ENCODE measurements at regions of chr2 and their contacts with region 1.

Region 1: GRCh38 chr2:131673392-131674173 is 145.9 kb downstream of the CCDC74A start:
- DNase-seq: peak; percentile 62
- ATAC-seq: peak; percentile 78
- H3K4me3 Mint-ChIP-seq: peak overlapping the region; percentile 64
- H3K27ac Mint-ChIP-seq: no peak overlapping the region
- H3K4me1 Mint-ChIP-seq: peaks cover 19% of the 10 kb centered on the region
- H3K27me3 Mint-ChIP-seq: peaks cover 12% of the 10 kb centered on the region
- CTCF ChIP-seq: peak; percentile 68

Region 2: DNA sequence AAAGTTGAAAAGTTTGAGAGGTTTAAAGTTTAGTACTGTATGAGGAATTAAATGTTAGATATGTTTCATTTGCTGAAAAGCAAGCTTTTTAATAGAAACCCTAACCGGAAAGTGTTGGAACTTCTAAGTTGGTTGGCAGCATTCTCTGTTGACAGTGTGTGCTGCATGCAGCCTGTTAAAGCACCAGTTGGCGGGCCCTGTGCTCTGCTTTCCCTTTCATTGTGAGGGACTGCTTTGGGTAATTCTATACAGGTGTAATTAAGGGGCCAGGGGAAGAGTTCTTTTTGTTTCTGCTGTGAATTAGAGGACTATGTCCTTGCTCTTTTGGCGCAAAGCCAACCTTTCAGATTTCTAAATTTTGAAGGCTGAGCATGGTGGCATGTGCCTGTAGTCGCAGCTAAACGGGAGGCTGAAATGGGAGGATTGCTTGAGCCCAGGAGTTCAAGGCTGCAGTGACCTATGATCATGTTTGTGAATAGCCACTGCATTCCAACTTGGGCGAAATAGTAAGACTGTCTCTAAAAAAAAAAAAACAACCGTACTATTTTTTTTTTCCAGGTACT is 548.3 kb before region 1 on chr2:
- CTCF ChIA-PET with region 1: no interaction called
- POLR2A ChIA-PET with region 1: no interaction called
- intact Hi-C with region 1: no loop called
- DNase-seq: no peak
- ATAC-seq: no peak
- H3K4me3 Mint-ChIP-seq: no peak overlapping the region
- H3K27ac Mint-ChIP-seq: no peak overlapping the region
- H3K4me1 Mint-ChIP-seq: no peaks in the 10 kb centered on the region
- H3K27me3 Mint-ChIP-seq: no peaks in the 10 kb centered on the region
- CTCF ChIP-seq: no peak

Region 3: GRCh38 chr2:131154071-131154531 is 519.5 kb before region 1 on chr2:
- CTCF ChIA-PET with region 1: interaction called, 21 read pairs
- POLR2A ChIA-PET with region 1: no interaction called
- intact Hi-C with region 1: loop called (anchors 1 kb)
- DNase-seq: peak; percentile 49
- ATAC-seq: peak; percentile 91
- H3K4me3 Mint-ChIP-seq: no peak overlapping the region
- H3K27ac Mint-ChIP-seq: no peak overlapping the region
- H3K4me1 Mint-ChIP-seq: peaks cover 21% of the 10 kb centered on the region
- H3K27me3 Mint-ChIP-seq: no peaks in the 10 kb centered on the region
- CTCF ChIP-seq: no peak

Region 4: DNA sequence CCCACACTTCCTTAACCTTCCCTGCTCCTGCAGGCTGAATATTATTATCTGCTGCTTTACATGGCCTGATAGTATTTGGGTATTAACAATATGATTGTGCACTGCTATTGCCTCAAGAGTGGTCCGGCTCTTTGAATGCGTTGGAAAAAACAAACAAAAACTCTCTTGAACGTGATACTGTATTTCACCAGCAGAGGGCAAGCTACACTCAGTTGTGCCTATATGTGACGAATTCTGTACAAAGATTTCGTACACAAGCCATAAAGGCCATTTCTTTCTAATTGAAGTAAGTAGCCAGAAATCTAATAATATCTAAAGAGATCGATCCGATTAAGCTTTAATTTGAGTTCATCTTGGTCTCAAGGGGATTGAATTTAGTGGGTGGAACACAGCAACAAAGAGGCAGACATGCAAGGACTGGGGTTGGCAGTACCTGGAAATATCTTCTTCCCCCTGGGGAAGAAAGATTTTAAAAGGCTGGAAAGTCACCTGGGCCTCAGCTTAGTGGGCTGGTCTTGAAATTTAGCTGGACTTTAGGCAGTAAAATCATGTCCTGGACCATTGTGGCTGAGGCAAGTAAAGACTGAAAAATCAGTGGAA is 260.3 kb before region 1 on chr2:
- CTCF ChIA-PET with region 1: interaction called, 42 read pairs
- POLR2A ChIA-PET with region 1: no interaction called
- intact Hi-C with region 1: loop called (anchors 1 kb)
- DNase-seq: no peak
- ATAC-seq: peak; percentile 65
- H3K4me3 Mint-ChIP-seq: no peak overlapping the region
- H3K27ac Mint-ChIP-seq: no peak overlapping the region
- H3K4me1 Mint-ChIP-seq: no peaks in the 10 kb centered on the region
- H3K27me3 Mint-ChIP-seq: peaks cover 36% of the 10 kb centered on the region
- CTCF ChIP-seq: peak; percentile 57

Region 5: DNA sequence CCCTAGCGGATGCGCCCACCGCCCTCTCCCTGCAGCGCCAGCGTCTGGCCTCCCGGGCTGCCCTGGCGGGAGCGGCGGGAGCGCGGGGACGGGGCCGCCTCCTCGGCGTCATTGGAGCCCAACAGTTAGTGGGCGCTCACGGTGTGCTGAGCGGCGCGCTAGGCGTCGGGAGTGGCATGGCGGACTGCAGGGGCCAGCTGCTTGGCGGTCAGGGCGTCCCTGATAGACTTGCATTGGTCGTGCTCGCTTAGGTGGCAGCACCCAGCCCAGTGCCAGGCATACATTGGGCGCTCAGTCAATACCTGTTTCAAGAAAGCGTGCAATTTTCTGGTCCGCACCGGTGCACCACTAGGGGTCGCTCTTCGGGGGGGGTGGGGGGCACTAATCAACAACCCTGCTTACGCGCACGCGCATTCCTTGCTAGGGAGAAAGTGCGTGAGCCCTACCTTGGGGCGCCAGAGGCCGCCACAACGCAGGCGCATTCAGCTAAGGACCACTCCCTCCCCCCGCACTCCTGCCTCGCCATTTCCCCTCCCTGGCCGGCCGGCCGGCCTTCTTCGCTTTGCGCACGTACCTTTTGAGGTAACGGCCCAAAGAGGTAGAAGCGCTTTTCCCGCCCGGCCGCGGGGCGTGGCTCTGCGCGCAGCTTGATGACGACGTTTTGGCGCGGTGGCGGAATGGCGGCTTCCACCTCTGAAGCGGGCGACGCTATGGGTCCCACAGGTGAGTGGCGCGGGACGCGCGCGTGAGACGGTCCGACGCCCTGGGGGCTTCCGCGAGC is 181.0 kb before region 1 on chr2:
- CTCF ChIA-PET with region 1: interaction called, 12 read pairs
- POLR2A ChIA-PET with region 1: no interaction called
- intact Hi-C with region 1: loop called (anchors 1 kb)
- DNase-seq: peak; percentile 97
- ATAC-seq: peak; percentile 86
- H3K4me3 Mint-ChIP-seq: peak overlapping the region; percentile 97
- H3K27ac Mint-ChIP-seq: peak overlapping the region; percentile 83
- H3K4me1 Mint-ChIP-seq: peaks cover 38% of the 10 kb centered on the region
- H3K27me3 Mint-ChIP-seq: no peaks in the 10 kb centered on the region
- CTCF ChIP-seq: peak; percentile 39

Region 6: DNA sequence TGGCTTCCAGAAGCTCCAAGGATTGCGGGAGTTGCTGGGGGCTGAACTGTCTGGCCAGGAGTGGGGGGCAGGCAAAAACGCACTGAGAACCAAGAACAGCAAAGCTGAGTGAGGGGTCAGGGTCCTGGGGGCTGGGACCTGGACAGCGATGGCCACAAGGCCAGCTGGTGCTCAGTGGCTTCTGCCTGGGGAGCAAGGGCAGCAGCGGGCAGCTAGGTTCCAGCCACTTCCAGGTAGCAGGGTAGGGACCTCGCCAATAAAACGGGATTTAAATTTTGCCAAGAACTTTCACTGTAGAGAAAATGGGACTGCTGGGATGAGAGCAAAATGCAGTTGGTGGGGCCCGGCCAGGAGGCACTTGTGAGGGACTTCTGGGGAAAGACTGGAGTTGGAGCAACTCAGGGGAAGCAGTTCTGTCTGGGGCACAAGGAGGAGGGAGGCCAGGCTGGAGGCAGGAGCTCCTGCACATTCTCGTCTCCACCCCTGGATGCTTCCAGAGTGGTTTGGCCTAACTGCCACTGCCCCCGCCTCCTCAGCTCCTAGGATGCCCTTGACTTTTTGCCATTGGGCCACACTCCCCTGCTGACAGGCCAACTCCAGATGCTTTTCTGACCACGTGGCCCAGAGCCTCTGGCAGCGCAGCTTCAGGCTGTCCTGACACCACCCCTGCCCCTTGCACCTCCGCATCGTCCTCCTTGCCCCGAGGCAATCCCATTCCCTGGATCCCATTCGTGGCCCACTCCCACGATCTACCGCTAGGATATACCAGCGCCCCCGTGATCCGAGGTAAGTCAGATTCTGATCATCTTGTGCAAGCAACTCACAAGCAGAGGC is 151.4 kb before region 1 on chr2:
- CTCF ChIA-PET with region 1: interaction called, 3 read pairs
- POLR2A ChIA-PET with region 1: no interaction called
- intact Hi-C with region 1: loop called (anchors 5 kb)
- DNase-seq: no peak
- ATAC-seq: no peak
- H3K4me3 Mint-ChIP-seq: no peak overlapping the region
- H3K27ac Mint-ChIP-seq: no peak overlapping the region
- H3K4me1 Mint-ChIP-seq: no peaks in the 10 kb centered on the region
- H3K27me3 Mint-ChIP-seq: no peaks in the 10 kb centered on the region
- CTCF ChIP-seq: no peak

Region 7: GRCh38 chr2:131584940-131585339 is 88.6 kb before region 1 on chr2:
- CTCF ChIA-PET with region 1: interaction called, 3 read pairs
- POLR2A ChIA-PET with region 1: no interaction called
- intact Hi-C with region 1: loop called (anchors 5 kb)
- DNase-seq: no peak
- ATAC-seq: peak; percentile 77
- H3K4me3 Mint-ChIP-seq: peak overlapping the region; percentile 50
- H3K27ac Mint-ChIP-seq: peak overlapping the region; percentile 72
- H3K4me1 Mint-ChIP-seq: peaks cover 47% of the 10 kb centered on the region
- H3K27me3 Mint-ChIP-seq: peaks cover 14% of the 10 kb centered on the region
- CTCF ChIP-seq: no peak

Region 8: DNA sequence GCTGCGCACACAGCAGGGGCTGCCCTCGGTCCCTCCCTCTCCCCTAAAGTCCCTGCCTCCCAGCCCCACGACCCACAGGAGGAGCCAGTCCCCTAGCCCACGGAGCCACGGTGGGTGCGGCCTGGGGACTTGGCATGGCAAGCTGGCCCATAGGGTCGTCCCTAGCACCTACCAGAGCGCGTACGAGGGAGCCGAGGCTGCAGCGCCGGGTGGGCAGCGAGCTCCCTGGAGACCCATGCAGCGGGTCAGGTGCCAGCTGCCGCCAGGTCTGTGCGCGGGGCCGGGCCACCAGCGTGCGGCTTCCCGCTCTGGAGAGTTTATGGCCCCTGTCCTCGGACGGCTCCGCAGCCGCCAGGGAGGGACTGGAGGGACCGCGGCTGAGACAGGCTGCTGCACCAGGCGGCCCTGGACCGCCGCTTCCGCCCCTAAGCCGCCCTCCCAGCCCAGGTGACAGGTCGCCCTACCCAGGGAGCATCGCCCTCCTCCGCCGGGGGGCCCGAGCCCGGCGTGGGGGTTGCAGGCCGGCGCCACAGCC is 127.7 kb after region 1 on chr2:
- CTCF ChIA-PET with region 1: interaction called, 11 read pairs
- POLR2A ChIA-PET with region 1: no interaction called
- intact Hi-C with region 1: loop called (anchors 1 kb)
- DNase-seq: no peak
- ATAC-seq: no peak
- H3K4me3 Mint-ChIP-seq: no peak overlapping the region
- H3K27ac Mint-ChIP-seq: no peak overlapping the region
- H3K4me1 Mint-ChIP-seq: peaks cover 4% of the 10 kb centered on the region
- H3K27me3 Mint-ChIP-seq: peaks cover 3% of the 10 kb centered on the region
- CTCF ChIP-seq: no peak